SK-N-SH (cell line): ENCODE measurements at regions of chr17 and their contacts with region 1.

Region 1: DNA sequence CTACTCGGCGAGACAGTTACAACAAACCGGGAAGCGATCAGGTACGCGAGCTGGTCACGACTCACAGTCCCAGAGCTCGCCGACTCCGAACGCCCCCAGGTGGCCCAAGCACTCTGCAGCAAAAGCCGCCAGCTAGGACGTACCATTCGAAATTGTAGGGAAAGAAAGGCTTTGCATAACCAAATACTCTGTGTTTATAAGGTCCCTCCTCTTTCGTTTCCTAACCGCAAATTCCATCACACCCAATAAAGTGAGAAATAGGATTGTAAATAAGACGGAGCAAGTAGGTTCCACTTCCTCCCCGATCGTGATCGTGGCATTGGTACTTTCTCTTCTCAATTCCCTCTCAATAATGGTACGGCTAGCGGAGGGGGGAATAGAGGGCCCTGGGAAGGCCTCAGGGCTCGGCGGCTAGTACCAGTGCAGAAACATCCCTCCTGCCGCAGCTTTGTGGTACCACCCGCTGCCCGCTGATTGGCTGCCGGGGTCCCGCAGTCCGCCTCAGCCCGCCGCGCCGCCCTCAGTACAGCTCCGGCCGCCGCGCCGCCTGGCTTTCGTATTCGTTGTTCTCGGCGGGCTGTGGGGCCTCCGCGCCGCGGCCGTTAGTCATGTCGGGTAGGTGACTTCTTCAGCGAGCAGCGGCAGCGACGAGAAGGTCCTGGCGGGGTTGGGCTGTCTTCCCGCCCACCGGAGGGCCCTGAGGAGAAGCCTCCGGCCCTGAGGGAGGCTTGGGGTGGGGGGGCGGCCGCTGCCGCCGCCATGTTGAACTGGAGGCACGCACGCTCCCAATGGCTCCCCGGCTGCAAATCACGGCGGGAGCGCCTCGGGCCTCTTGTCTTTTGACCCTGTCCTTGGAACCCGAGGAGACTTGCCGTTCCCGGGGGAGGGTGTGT is at the start of gene TAF15:
- DNase-seq: peak; percentile 95
- H3K4me3 ChIP-seq: peak within 1 kb of the TSS; percentile 77 to 80
- H3K27ac ChIP-seq: peak within 1 kb of the TSS; percentile 75 to 99
- H3K4me1 ChIP-seq: peaks cover 0 to 21% of the 10 kb centered on the region in 2 experiments; a peak in 3 of 4 replicates
- H3K27me3 ChIP-seq: no peaks in the 10 kb centered on the region
- CTCF ChIP-seq: peak; percentile 78
- EP300 ChIP-seq: peak in 1 of 2 experiments; percentile 25; a peak in 1 of 4 replicates
- RAD21 ChIP-seq: peak; percentile 52
- polyA plus RNA-seq, gene TAF15: 67.5 and 78.0 TPM in 2 replicates

Region 2: GRCh38 chr17:35578197-35578928 is 230.8 kb before region 1 on chr17 and contains the start of gene PEX12:
- CTCF ChIA-PET with region 1: interaction called, 5 read pairs
- POLR2A ChIA-PET with region 1: interaction called, 11 read pairs
- DNase-seq: peak; percentile 87
- H3K4me3 ChIP-seq: peak within 1 kb of the TSS; percentile 89 to 94
- H3K27ac ChIP-seq: peak within 1 kb of the TSS; percentile 58 to 93
- H3K4me1 ChIP-seq: peaks cover 0 to 16% of the 10 kb centered on the region in 2 experiments; a peak in 3 of 4 replicates
- H3K27me3 ChIP-seq: no peaks in the 10 kb centered on the region
- CTCF ChIP-seq: 0 out of 2 replicates have a peak, but pooled peaks have one; percentile 12
- EP300 ChIP-seq: 0 out of 4 replicates have a peak, but pooled peaks of 1 of the 2 experiments have one; percentile 12
- RAD21 ChIP-seq: no peak
- polyA plus RNA-seq, gene PEX12: 4.3 and 5.4 TPM in 2 replicates

Region 3: GRCh38 chr17:35587074-35587971 is 221.9 kb before region 1 on chr17 and contains the start of gene AP2B1:
- CTCF ChIA-PET with region 1: interaction called, 10 read pairs
- POLR2A ChIA-PET with region 1: interaction called, 4 read pairs
- DNase-seq: peak; percentile 88
- H3K4me3 ChIP-seq: peak within 1 kb of the TSS; percentile 73 to 94
- H3K27ac ChIP-seq: peak within 1 kb of the TSS; percentile 85 to 93
- H3K4me1 ChIP-seq: peaks cover 5 to 18% of the 10 kb centered on the region in 2 experiments; a peak in 2 of 4 replicates
- H3K27me3 ChIP-seq: no peaks in the 10 kb centered on the region
- CTCF ChIP-seq: no peak
- EP300 ChIP-seq: no peak; a peak in 1 of 4 replicates
- RAD21 ChIP-seq: no peak
- polyA plus RNA-seq, gene AP2B1: 97.8 and 135 TPM in 2 replicates

Region 4: GRCh38 chr17:35788504-35789368 is 20.5 kb before region 1 on chr17:
- CTCF ChIA-PET with region 1: interaction called, 809 read pairs
- POLR2A ChIA-PET with region 1: interaction called, 12 read pairs
- DNase-seq: peak; percentile 44
- H3K4me3 ChIP-seq: no peak overlapping the region
- H3K27ac ChIP-seq: peak overlapping the region; percentile 63 to 79
- H3K4me1 ChIP-seq: peaks cover 0 to 48% of the 10 kb centered on the region in 2 experiments; a peak in 3 of 4 replicates
- H3K27me3 ChIP-seq: peaks cover 16% of the 10 kb centered on the region
- CTCF ChIP-seq: no peak
- EP300 ChIP-seq: no peak
- RAD21 ChIP-seq: no peak

Region 5: DNA sequence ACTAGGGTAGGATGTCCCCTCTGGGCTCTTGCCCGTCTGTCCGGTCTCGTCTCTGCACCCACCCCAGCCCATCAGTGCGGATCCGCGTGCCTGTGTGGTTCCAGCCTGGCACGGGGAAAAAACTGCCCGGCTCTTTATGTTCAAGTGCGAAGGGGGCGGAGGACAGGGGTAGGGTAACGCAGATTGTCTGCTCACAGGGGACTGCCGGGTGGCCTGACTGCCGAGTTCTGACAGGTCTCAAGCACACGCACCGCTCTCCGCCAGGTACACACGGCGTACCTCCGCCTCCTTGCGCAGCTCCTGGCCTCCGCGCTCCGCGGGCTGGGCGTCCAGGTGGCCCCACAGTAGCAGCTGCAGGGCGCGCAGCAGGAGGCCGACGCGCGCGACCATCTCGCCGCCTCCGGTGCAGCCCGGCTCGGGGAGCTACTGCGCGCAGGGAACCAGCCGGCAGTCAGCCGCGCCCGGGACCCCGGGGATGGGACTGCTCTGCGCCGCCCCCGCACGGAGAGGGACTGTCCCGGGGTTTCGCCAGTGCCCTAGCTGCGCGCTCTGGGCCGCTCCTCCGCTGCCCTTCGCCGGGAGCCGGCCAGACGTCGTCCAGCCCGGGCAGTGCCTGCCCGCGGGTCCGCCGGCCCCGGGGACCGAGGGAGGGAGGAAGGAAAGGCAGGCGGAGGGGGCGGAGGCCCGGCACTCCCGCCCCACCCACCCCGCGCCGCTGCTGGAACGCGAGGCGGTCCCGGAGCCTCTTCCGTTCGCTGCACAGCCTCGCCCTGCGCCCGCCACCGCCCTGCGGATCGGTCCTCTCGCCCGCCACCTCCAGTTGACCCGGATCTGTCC is 14.0 kb before region 1 on chr17 and contains the start of gene MMP28:
- CTCF ChIA-PET with region 1: interaction called, 27 read pairs
- POLR2A ChIA-PET with region 1: interaction called, 5 read pairs
- DNase-seq: peak; percentile 86
- H3K4me3 ChIP-seq: peak within 1 kb of the TSS; percentile 55 to 56; a peak in 3 of 4 replicates
- H3K27ac ChIP-seq: peak within 1 kb of the TSS in 1 of 2 experiments; percentile 53; a peak in 1 of 4 replicates
- H3K4me1 ChIP-seq: peaks cover 0 to 44% of the 10 kb centered on the region in 2 experiments; a peak in 2 of 4 replicates
- H3K27me3 ChIP-seq: peaks cover 47% of the 10 kb centered on the region
- CTCF ChIP-seq: no peak
- EP300 ChIP-seq: no peak
- RAD21 ChIP-seq: no peak
- polyA plus RNA-seq, gene MMP28: 0.23 and 0.33 TPM in 2 replicates

Region 6: GRCh38 chr17:35889818-35890763 is 80.9 kb after region 1 on chr17:
- CTCF ChIA-PET with region 1: no interaction called
- POLR2A ChIA-PET with region 1: no interaction called
- DNase-seq: peak; percentile 60
- H3K4me3 ChIP-seq: no peak overlapping the region
- H3K27ac ChIP-seq: peak overlapping the region; percentile 5 to 45; a peak in 1 of 4 replicates
- H3K4me1 ChIP-seq: peaks cover 4 to 8% of the 10 kb centered on the region in 2 experiments; a peak in 2 of 4 replicates
- H3K27me3 ChIP-seq: no peaks in the 10 kb centered on the region
- CTCF ChIP-seq: no peak
- EP300 ChIP-seq: no peak
- RAD21 ChIP-seq: no peak

Region 7: DNA sequence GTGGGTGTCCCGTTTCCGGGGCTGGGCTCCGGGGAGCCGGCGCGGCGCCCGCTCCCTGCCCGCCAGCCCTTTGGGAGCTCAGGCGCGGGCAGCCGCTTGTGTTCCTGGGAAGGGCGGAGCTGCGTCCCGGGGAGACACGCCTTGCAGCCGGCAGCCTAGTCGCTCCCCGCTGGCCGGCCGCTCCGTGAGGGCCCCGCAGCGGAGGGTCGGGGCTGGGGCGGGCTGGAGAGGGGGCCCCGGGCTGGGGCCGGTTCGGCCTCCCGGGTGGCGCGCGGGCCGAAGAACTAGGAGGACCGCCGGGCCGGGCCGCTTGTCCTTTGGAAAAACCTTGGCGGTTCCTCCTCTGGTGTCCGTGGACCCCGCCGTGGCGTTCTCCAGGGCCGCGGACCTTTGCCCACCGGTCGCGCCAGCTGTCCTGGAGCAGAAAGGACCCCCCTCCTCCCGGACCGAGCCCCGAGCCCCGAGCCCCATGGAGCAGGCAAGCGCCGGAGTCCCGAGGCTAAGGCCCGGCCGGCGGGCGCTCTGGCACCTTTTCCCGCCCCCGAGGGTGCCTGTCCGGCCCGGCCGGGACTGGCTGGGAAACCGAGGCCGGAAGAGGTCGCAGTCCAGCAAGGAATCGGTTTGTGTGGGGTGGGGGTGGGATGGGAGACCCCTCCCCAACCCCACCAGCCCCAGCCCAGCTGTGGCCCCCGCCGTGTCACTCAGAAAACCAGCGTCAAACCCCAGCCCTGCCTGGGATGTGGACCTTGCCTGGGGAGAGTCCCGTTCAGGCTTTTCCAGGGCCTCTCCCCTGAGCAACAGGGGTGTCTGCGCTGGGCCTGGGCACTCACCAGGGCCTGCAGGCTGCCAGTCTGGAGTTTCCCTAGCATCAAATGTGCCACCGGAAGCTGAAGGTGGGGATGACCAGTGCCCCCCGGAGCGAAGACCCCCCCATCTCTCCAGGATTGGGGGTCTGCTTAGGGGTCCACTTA is 374.1 kb after region 1 on chr17:
- CTCF ChIA-PET with region 1: no interaction called
- POLR2A ChIA-PET with region 1: no interaction called
- DNase-seq: peak; percentile 67
- H3K4me3 ChIP-seq: peak overlapping the region; percentile 37 to 39; a peak in 2 of 4 replicates
- H3K27ac ChIP-seq: no peak overlapping the region
- H3K4me1 ChIP-seq: no peaks in the 10 kb centered on the region
- H3K27me3 ChIP-seq: peaks cover 58% of the 10 kb centered on the region
- CTCF ChIP-seq: no peak
- EP300 ChIP-seq: no peak
- RAD21 ChIP-seq: no peak